Naive thymus-derived CD4-positive, alpha-beta T cell (primary cell): ENCODE measurements at regions of chr15 and their contacts with region 1.

Region 1: DNA sequence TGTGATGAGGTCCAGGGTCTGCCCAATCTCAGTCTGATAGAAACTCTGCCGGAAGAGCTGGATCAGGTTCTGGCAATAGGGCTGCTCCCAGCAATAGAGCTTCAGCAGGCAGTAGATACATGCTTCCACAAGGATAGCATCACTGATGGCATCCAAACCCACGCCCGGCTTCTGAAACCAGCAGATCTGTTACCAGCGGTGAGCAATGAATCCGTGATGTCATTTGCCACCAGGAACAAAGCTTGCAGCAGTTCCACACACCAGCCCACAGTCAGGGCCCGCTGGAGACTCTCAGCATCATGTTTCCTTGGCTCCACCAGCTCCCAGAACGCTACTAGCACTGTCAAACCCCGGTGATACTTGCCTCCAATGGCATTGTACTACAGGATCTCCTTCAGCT is 19.3 kb upstream of the TTBK2 start:
- DNase-seq: no peak
- ATAC-seq: no peak
- H3K4me3 ChIP-seq: no peak overlapping the region
- H3K4me3 Mint-ChIP-seq: no peak overlapping the region
- H3K27ac ChIP-seq: no peak overlapping the region
- H3K27ac Mint-ChIP-seq: no peak overlapping the region
- H3K4me1 ChIP-seq: no peaks in the 10 kb centered on the region
- H3K4me1 Mint-ChIP-seq: peaks cover 0 to 2% (median 0%) of the 10 kb centered on the region in 7 donors
- H3K27me3 ChIP-seq: no peaks in the 10 kb centered on the region
- H3K27me3 Mint-ChIP-seq: no peaks in the 10 kb centered on the region

Region 2: GRCh38 chr15:42863572-42864239 is 76.1 kb before region 1 on chr15:
- CTCF ChIA-PET with region 1: no interaction called
- POLR2A ChIA-PET with region 1: no interaction called
- intact Hi-C with region 1: loop called in 1 of 2 experiments (anchors 2 kb)
- DNase-seq: no peak
- ATAC-seq: no peak
- H3K4me3 ChIP-seq: no peak overlapping the region
- H3K4me3 Mint-ChIP-seq: no peak overlapping the region
- H3K27ac ChIP-seq: no peak overlapping the region
- H3K27ac Mint-ChIP-seq: no peak overlapping the region
- H3K4me1 ChIP-seq: no peaks in the 10 kb centered on the region
- H3K4me1 Mint-ChIP-seq: peaks cover 0 to 19% (median 0%) of the 10 kb centered on the region in 7 donors
- H3K27me3 ChIP-seq: no peaks in the 10 kb centered on the region
- H3K27me3 Mint-ChIP-seq: no peaks in the 10 kb centered on the region

Region 3: GRCh38 chr15:43086551-43086950 is 146.7 kb after region 1 on chr15:
- CTCF ChIA-PET with region 1: no interaction called
- POLR2A ChIA-PET with region 1: no interaction called
- intact Hi-C with region 1: no loop called
- DNase-seq: no peak
- ATAC-seq: no peak
- H3K4me3 ChIP-seq: no peak overlapping the region
- H3K4me3 Mint-ChIP-seq: no peak overlapping the region
- H3K27ac ChIP-seq: no peak overlapping the region
- H3K27ac Mint-ChIP-seq: peak overlapping the region in 4 of 9 donors; percentile 1 to 75 (median 17)
- H3K4me1 ChIP-seq: no peaks in the 10 kb centered on the region
- H3K4me1 Mint-ChIP-seq: peaks cover 10 to 43% (median 30%) of the 10 kb centered on the region in 7 donors
- H3K27me3 ChIP-seq: no peaks in the 10 kb centered on the region
- H3K27me3 Mint-ChIP-seq: no peaks in the 10 kb centered on the region